ENCODE measurements at regions of chr6 and their contacts with region 1.

Region 1: GRCh38 chr6:109440331-109441068 is at the starts of genes PPIL6 and SMPD2:
- DNase-seq: peak; percentile 94
- ATAC-seq: peak; percentile 95
- total RNA-seq, gene PPIL6: 4.5 TPM
- total RNA-seq, gene SMPD2: 4.4 TPM

Region 2: GRCh38 chr6:109455502-109456282 is 15.2 kb after region 1 on chr6 and contains the start of gene MICAL1:
- intact Hi-C with region 1: loop called (anchors 2 kb)
- DNase-seq: peak; percentile 90
- ATAC-seq: peak; percentile 80
- total RNA-seq, gene MICAL1: 8.3 TPM

Region 3: GRCh38 chr6:109482905-109483735 is 42.6 kb after region 1 on chr6 and contains the start of gene ZBTB24:
- intact Hi-C with region 1: loop called (anchors 5 kb)
- DNase-seq: peak; percentile 98
- ATAC-seq: peak; percentile 97
- total RNA-seq, gene ZBTB24: 2.6 TPM